Psoas muscle (tissue), 8 donors: ENCODE measurements at regions of chr7 and their contacts with region 1.

Region 1: DNA sequence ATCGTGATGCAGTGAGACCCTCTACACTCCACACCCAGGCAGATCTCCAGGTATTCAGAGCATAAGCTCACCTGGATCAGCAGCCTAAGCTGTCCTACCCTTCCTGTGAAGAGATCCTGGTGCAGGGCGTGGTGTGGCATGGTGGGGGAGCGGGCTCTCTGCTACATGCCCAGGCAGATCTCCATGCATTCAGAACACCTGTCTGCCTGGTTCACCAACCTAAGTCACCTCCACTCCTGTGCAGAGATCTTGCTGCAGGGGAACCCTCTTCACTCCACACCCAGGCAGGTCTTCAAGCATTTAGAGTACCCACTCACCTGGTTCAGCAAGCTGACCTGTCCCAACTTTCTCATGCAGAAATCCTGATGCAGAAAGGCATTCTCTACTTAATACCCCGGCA is 394.4 kb upstream of the SEMA3A start:
- DNase-seq: no peak
- ATAC-seq: no peak
- H3K4me3 ChIP-seq: no peak overlapping the region
- H3K27ac ChIP-seq: no peak overlapping the region
- H3K4me1 ChIP-seq: no peaks in the 10 kb centered on the region
- H3K27me3 ChIP-seq: no peaks in the 10 kb centered on the region
- CTCF ChIP-seq: no peak

Region 2: DNA sequence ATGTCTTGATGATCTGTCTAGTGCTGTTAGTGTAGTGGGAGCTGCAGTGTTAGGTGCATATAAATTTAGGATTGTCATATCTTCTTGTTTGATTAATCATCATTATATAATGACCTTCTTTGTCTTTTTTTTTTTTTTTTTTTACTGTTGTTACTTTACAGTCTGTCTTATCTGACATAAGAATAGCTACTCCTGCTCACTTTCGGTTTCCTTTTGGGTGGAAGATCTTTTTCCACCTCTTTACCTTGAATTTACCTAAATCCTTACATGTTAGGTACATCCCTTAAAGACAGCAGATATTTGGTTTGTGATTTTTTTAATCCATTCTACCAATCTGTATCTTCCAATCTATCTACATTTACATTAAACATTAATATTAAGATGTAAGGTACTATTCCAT is 1312.8 kb before region 1 on chr7:
- intact Hi-C with region 1: loop called in 1 of 2 experiments (anchors 5 kb)
- DNase-seq: no peak
- ATAC-seq: no peak
- H3K4me3 ChIP-seq: no peak overlapping the region
- H3K27ac ChIP-seq: no peak overlapping the region
- H3K4me1 ChIP-seq: no peaks in the 10 kb centered on the region
- H3K27me3 ChIP-seq: no peaks in the 10 kb centered on the region
- CTCF ChIP-seq: no peak